Right ventricle myocardium superior (tissue), 1 donor: ENCODE measurements at regions of chr4 and their contacts with region 1.

Region 1: GRCh38 chr4:57043347-57044251 is 64.9 kb downstream of the POLR2B start:
- DNase-seq: peak; percentile 55
- ATAC-seq: peak; percentile 70

Region 2: DNA sequence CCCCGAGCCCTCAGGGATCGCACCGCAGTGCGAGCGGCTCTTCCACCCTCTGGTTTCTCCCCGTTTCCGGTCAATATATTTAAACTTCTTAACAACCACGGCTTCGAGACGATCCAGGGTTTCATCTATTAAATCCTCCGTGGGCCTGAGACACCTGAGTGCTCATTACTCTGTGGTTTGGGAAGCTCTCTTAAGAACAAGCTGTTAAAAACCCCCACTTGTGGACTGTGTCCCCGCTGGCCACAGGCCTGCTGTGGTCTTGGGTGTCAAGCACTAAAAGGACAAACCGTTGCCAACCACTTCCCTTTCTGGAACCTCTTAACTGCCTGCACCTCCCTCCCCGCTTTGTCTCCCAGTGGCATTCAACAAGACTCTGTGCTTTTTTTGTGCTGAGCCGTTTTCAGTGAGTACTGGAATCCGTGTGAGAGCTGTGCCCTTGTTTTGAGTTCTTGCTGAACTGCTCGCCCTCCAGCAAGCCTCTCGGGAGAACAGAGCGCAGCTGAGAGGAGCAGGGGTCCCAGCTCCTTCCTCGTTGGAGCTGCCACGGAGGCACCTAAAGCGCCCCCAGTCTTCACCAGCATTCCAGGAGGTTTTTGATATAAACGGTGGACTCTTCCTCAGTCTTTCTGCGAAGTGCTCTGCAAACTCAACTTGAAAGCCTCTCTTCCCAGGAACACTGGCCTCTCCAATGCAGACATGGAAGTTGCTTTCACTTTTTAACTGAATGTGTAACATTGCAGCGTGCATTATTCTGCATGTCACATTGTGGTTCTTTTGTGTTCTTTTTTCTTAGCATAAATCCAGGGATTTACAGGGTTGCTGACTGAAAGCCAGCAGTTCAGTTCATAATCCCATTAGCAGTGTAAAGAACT is 67.3 kb after region 1 on chr4:
- intact Hi-C with region 1: loop called (anchors 5 kb)
- DNase-seq: peak; percentile 65
- ATAC-seq: peak; percentile 59